ENCODE measurements at regions of chr6 and their contacts with region 1.

Region 1: GRCh38 chr6:134161036-134161435 is 108.6 kb upstream of the SLC2A12 start:
- DNase-seq: no peak
- ATAC-seq: no peak

Region 2: DNA sequence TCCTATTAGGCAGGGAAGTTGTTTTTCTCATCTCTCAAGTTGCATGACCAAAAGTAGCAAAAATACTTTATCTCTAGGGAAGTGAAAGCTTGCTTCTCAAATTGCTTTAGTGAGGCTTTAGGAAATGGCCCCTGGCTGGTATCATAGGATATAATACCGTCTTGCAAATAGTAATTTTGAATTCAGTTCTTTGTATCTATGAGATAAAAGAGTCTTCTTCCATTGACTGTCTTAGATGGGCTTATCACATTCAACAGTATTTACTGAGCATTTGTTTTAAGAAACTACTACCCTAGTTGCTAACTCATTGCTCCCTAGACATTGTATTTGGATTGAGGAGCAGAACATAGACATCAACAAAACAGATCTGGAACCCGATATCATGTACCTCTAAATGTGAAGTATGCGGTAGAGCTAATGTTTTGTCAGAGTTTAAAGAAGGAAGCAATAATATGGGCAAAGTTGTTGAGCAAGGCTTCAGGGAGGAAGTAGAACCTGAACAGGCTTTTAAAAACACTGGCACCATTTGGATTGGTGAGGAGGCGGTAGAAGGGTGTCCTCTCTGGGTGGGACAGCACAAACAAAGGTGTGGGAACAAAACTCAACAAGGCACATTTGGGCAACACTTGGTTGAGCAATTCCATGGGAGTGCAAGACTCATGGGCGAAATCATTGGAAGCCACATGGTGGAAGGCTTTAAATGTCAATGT is 55.4 kb after region 1 on chr6:
- intact Hi-C with region 1: no loop called
- DNase-seq: no peak
- ATAC-seq: no peak

Region 3: DNA sequence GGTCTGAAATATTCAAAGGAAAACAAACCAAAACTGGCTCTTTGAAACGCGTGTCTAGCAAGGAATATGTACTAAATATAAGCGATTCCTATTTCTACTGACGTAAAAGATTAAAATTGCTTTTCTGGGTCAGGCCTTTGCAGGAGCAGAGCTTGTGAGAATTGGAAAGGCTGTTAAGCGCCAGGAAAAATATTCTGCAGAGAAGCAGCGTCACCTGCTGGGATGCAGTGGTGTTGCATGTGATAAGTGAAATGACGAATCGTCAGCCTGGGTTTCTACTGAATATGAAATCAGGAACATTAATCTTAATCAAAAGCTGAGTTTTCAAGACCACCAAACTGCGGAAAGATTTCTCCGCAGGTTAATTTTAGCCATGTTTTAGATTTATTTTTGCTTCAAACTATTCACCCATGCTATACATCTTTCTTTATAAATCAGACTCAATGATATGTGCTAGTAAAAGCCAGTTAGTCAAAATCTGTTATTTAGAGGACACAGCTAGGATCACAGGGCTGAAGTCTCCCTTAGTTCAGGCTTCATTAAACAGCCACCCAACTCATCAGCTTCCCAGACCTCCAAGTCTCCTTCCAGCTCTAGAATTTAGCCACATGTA is 721.5 kb after region 1 on chr6:
- intact Hi-C with region 1: loop called (anchors 5 kb)
- DNase-seq: peak; percentile 73
- ATAC-seq: peak; percentile 74

Region 4: GRCh38 chr6:134938896-134939295 is 777.9 kb after region 1 on chr6:
- intact Hi-C with region 1: loop called (anchors 2 kb)
- DNase-seq: no peak
- ATAC-seq: no peak